ENCODE measurements at regions of chr10 and their contacts with region 1.

Region 1: GRCh38 chr10:58282615-58283014 is 13.7 kb downstream of the CISD1 start:
- DNase-seq: peak; percentile 30
- H3K4me3 Mint-ChIP-seq: peak overlapping the region; percentile 23
- H3K27ac Mint-ChIP-seq: peak overlapping the region; percentile 10
- H3K4me1 Mint-ChIP-seq: peaks cover 35% of the 10 kb centered on the region
- H3K27me3 Mint-ChIP-seq: no peaks in the 10 kb centered on the region

Region 2: GRCh38 chr10:56360967-56361612 is 1921.5 kb before region 1 on chr10 and contains the start of gene ZWINT:
- intact Hi-C with region 1: loop called (anchors 5 kb)
- DNase-seq: peak; percentile 92
- H3K4me3 Mint-ChIP-seq: peak within 1 kb of the TSS; percentile 99
- H3K27ac Mint-ChIP-seq: peak within 1 kb of the TSS; percentile 89
- H3K4me1 Mint-ChIP-seq: peaks cover 60% of the 10 kb centered on the region
- H3K27me3 Mint-ChIP-seq: no peaks in the 10 kb centered on the region
- total RNA-seq, gene ZWINT: 101 and 104 TPM in 2 replicates

Region 3: DNA sequence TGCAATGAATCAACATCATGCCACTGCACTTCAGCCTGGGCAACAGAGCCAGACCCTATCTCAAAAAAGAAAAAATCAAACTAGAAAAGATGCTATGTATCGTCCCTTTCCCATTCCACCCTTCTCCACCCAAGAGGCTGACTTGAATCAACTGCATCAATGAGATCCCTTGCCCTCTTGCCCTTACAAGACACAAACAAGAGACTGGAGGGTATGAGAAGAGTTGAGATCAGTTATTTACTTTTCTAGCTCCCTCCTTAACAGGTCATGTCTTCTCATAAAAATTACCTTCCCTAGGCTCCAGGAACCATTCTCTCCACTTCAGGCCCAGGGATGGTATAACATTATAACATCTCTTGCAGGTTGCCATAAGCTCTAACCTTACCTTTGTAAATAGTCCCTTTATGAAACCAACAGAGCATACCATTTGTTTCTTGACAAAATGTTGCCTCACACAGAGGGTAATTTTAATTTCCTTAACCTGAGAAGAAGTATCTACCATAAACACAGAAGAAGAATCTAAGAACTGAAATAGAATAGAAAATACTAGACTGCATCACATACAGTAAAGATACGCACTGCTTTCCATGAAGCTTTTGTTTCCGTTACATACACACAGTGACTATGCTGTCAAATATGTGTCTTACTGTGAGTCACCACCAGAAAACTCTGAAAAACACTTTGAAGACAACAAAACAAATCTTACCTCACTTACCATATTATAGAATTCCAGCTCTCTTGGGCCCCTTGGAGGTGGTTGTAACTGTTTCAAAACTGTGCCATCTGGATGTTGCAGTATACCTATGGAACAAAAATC is 45.4 kb before region 1 on chr10:
- intact Hi-C with region 1: loop called (anchors 1 kb)
- DNase-seq: no peak
- H3K4me3 Mint-ChIP-seq: no peak overlapping the region
- H3K27ac Mint-ChIP-seq: peak overlapping the region; percentile 93
- H3K4me1 Mint-ChIP-seq: peaks cover 43% of the 10 kb centered on the region
- H3K27me3 Mint-ChIP-seq: peaks cover 2% of the 10 kb centered on the region

Region 4: GRCh38 chr10:58334817-58335305 is 52.2 kb after region 1 on chr10 and contains the start of gene UBE2D1:
- intact Hi-C with region 1: loop called (anchors 5 kb)
- DNase-seq: peak; percentile 73
- H3K4me3 Mint-ChIP-seq: peak within 1 kb of the TSS; percentile 92
- H3K27ac Mint-ChIP-seq: peak within 1 kb of the TSS; percentile 80
- H3K4me1 Mint-ChIP-seq: peaks cover 14% of the 10 kb centered on the region
- H3K27me3 Mint-ChIP-seq: peaks cover 8% of the 10 kb centered on the region
- total RNA-seq, gene UBE2D1: 17.9 and 19.6 TPM in 2 replicates

Region 5: GRCh38 chr10:58555170-58555929 is 272.7 kb after region 1 on chr10:
- intact Hi-C with region 1: no loop called
- DNase-seq: no peak
- H3K4me3 Mint-ChIP-seq: no peak overlapping the region
- H3K27ac Mint-ChIP-seq: no peak overlapping the region
- H3K4me1 Mint-ChIP-seq: no peaks in the 10 kb centered on the region
- H3K27me3 Mint-ChIP-seq: no peaks in the 10 kb centered on the region

Measured in activated T-helper 1 cell treated with anti-CD3 and anti-CD28 coated beads, Interleukin-12 subunit alpha, Interleukin-12 subunit beta, Interleukin-2, Interleukin-4 antibody, amounts not matched to agents 30 ng/mL and 10 ng/mL and 1 ng/mL, durations not matched to agents 14 hours and 24 hours and 36 hours (primary cell).